ENCODE measurements at regions of chr12 and their contacts with region 1.

Region 1: DNA sequence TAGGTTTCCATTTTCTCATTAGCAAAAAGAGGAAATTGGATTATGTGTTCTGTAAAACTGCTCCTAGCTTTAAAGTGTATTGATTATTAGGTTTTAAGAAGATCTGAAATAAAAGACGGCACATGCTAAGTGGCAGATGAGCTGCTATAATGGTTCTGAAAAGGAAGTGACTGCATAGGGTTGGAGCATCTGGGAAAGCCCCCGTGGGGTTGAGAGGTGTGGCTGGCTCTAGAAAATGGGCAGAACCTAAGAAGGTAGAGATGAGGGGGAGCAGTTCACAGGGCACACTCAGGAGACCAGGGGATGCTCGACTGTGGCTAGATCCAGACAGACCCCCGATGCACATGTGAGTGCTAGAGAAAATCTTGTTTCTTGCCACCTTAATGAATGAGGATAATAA is 1.9 kb downstream of the IFNG-AS1 start:
- DNase-seq: no peak
- ATAC-seq: peak; percentile 85
- H3K4me3 ChIP-seq: no peak overlapping the region
- H3K27ac ChIP-seq: peak overlapping the region; percentile 54; the same call in 1 of the 2 replicates
- H3K4me1 ChIP-seq: peaks cover 31% of the 10 kb centered on the region
- H3K27me3 ChIP-seq: no peaks in the 10 kb centered on the region
- CTCF ChIP-seq: no peak
- EP300 ChIP-seq: no peak
- POLR2A ChIP-seq: no peak
- RAD21 ChIP-seq: no peak

Region 2: GRCh38 chr12:67853204-67853603 is 138.0 kb before region 1 on chr12:
- CTCF ChIA-PET with region 1: no interaction called
- POLR2A ChIA-PET with region 1: no interaction called
- RAD21 ChIA-PET with region 1: no interaction called
- SMC1A ChIA-PET with region 1: no interaction called
- in situ Hi-C with region 1: no loop called
- intact Hi-C with region 1: no loop called
- DNase-seq: no peak
- ATAC-seq: no peak
- H3K4me3 ChIP-seq: no peak overlapping the region
- H3K27ac ChIP-seq: no peak overlapping the region
- H3K4me1 ChIP-seq: no peaks in the 10 kb centered on the region
- H3K27me3 ChIP-seq: no peaks in the 10 kb centered on the region
- CTCF ChIP-seq: no peak
- EP300 ChIP-seq: no peak
- POLR2A ChIP-seq: no peak
- RAD21 ChIP-seq: no peak

Region 3: GRCh38 chr12:67957383-67957782 is 33.8 kb before region 1 on chr12:
- CTCF ChIA-PET with region 1: interaction called, 6 read pairs
- POLR2A ChIA-PET with region 1: interaction called, 4 read pairs
- RAD21 ChIA-PET with region 1: interaction called, 5 read pairs
- SMC1A ChIA-PET with region 1: interaction called, 15 read pairs
- in situ Hi-C with region 1: no loop called
- intact Hi-C with region 1: no loop called
- DNase-seq: no peak
- ATAC-seq: no peak
- H3K4me3 ChIP-seq: no peak overlapping the region
- H3K27ac ChIP-seq: no peak overlapping the region
- H3K4me1 ChIP-seq: no peaks in the 10 kb centered on the region
- H3K27me3 ChIP-seq: no peaks in the 10 kb centered on the region
- CTCF ChIP-seq: no peak
- EP300 ChIP-seq: no peak
- POLR2A ChIP-seq: no peak
- RAD21 ChIP-seq: no peak

Region 4: GRCh38 chr12:68001486-68002466 is 10.6 kb after region 1 on chr12:
- CTCF ChIA-PET with region 1: interaction called, 17 read pairs
- POLR2A ChIA-PET with region 1: no interaction called
- RAD21 ChIA-PET with region 1: interaction called, 4 read pairs
- SMC1A ChIA-PET with region 1: interaction called, 9 read pairs
- in situ Hi-C with region 1: no loop called
- intact Hi-C with region 1: no loop called
- DNase-seq: no peak
- ATAC-seq: peak; percentile 64
- H3K4me3 ChIP-seq: no peak overlapping the region
- H3K27ac ChIP-seq: no peak overlapping the region
- H3K4me1 ChIP-seq: no peaks in the 10 kb centered on the region
- H3K27me3 ChIP-seq: no peaks in the 10 kb centered on the region
- CTCF ChIP-seq: peak; percentile 39 to 44 (median 40); a peak in 5 of 6 replicates
- EP300 ChIP-seq: no peak
- POLR2A ChIP-seq: no peak
- RAD21 ChIP-seq: peak; percentile 51

Region 5: GRCh38 chr12:68007466-68007865 is 16.3 kb after region 1 on chr12:
- CTCF ChIA-PET with region 1: interaction called, 17 read pairs
- POLR2A ChIA-PET with region 1: interaction called, 8 read pairs
- RAD21 ChIA-PET with region 1: interaction called, 4 read pairs
- SMC1A ChIA-PET with region 1: interaction called, 17 read pairs
- in situ Hi-C with region 1: no loop called
- intact Hi-C with region 1: no loop called
- DNase-seq: no peak
- ATAC-seq: no peak
- H3K4me3 ChIP-seq: no peak overlapping the region
- H3K27ac ChIP-seq: no peak overlapping the region
- H3K4me1 ChIP-seq: peaks cover 4% of the 10 kb centered on the region; the same call in 1 of the 2 replicates
- H3K27me3 ChIP-seq: no peaks in the 10 kb centered on the region
- CTCF ChIP-seq: no peak
- EP300 ChIP-seq: no peak
- POLR2A ChIP-seq: no peak
- RAD21 ChIP-seq: no peak

Region 6: GRCh38 chr12:68012712-68013111 is 21.6 kb after region 1 on chr12:
- CTCF ChIA-PET with region 1: interaction called, 7 read pairs
- POLR2A ChIA-PET with region 1: interaction called, 8 read pairs
- RAD21 ChIA-PET with region 1: interaction called, 4 read pairs
- SMC1A ChIA-PET with region 1: interaction called, 17 read pairs
- in situ Hi-C with region 1: no loop called
- intact Hi-C with region 1: no loop called
- DNase-seq: peak; percentile 33
- ATAC-seq: peak; percentile 74
- H3K4me3 ChIP-seq: no peak overlapping the region
- H3K27ac ChIP-seq: no peak overlapping the region
- H3K4me1 ChIP-seq: peaks cover 4% of the 10 kb centered on the region; the same call in 1 of the 2 replicates
- H3K27me3 ChIP-seq: no peaks in the 10 kb centered on the region
- CTCF ChIP-seq: no peak
- EP300 ChIP-seq: no peak
- POLR2A ChIP-seq: no peak
- RAD21 ChIP-seq: no peak